ENCODE measurements at regions of chr17 and their contacts with region 1.

Region 1: DNA sequence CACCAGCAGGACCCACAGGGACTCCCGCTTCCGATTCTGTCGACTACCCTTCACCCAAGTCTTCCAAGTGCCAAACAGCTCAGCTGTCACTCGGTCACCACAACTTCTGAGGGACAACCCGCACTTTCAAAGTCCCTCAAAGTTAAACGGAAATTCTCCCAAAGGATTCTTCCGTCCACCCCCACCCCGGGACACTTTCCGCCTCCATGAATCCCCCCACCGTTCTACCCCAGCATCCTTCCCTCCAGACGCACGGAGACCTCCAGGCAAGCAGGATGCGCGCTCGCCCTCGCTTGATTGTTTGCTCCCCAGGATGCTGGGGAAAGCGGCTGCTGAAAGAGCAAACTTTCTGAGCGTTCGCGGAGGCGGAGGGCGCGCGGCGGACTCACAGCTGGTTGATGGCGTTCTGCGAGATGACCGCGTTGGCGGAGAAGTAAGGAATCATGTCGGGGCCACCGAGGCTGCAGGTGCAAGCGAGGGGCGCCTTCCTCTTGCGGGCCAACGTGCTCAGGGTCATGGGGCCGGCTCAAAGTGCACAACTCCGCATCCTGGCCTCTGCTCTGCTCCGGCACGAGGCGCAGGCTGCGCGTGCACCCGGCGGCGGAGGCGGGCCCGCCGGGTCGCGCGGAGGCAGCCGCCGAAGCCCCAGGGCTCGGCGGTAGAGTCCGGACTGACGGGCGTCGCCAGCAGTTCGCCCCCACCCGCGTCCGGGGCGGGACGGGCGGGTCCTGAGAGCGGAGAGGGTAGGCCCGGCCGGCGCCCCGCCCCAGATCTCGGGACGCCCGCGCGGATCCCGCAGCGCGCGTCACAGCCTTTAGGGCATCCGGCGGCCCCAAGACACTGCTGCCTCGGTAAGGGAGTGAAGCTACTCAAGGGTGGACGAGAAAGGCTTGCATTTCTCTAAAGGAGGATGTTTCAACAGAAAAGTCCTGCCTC is 138.3 kb upstream of the CORO6 start:
- DNase-seq: peak; percentile 92 to 97 (median 94)
- ATAC-seq: peak; percentile 95 to 99 (median 98)
- H3K4me3 ChIP-seq: peak overlapping the region; percentile 62 to 95 (median 89)
- H3K27ac ChIP-seq: peak overlapping the region; percentile 48 to 97 (median 90)
- H3K4me1 ChIP-seq: peaks cover 0 to 42% (median 22%) of the 10 kb centered on the region in 12 donors
- H3K27me3 ChIP-seq: no peaks in the 10 kb centered on the region
- CTCF ChIP-seq: peak in 2 of 12 donors; percentile 6 to 26
- POLR2A ChIP-seq: peak; percentile 33 to 89

Region 2: DNA sequence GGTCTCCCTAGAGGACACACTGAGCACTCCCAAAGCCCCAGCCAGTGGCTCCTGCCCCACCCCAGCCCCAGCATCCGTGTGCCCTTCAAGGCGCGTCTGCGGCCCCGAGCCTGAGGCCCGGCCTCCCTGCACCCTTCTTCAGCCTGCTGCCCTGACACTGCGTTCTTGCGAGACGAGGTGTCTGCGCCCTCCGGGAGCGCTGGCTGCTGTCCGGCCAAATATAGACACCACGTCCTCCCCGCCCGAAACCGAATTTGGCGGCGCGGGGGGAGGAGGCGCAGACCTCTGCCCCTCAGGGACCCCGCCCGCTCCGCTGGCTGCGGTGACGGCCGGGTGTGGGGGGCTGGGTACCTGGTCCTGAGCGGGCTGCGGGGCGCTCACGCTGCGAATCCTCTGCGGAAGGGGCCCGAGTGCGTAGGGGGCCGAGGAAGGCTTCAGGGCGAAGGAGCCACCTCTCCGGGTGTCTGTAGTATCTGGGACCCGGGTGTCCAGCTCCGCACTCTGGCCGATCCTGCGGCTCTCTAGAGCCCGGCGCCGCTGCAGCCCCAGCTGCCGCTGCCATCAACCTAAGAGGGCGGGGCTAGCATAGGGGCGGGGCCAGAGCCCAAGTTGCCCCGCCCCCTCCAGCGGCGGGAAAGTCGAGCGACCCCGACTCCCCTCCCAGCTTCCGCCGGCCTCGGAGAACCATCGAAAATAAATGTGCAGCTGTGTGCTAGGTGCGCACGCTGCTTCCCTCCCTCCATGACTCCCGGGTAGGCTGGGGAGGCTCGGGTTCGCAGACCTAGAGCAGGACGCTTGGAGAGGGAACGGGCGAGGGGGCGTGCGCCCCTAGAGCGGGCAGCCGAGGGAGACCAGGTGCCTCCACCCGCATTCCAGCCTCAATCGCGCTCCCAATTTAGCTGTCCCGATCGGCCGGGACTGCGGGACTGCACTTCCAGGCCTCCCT is 138.4 kb before region 1 on chr17 and contains the start of gene CORO6:
- intact Hi-C with region 1: no loop called
- DNase-seq: peak; percentile 64 to 85 (median 81)
- ATAC-seq: peak; percentile 53 to 71 (median 70)
- H3K4me3 ChIP-seq: peak within 1 kb of the TSS; percentile 51 to 83 (median 72)
- H3K27ac ChIP-seq: peak within 1 kb of the TSS; percentile 28 to 98 (median 88)
- H3K4me1 ChIP-seq: peaks cover 3 to 70% (median 40%) of the 10 kb centered on the region in 12 donors
- H3K27me3 ChIP-seq: no peaks in the 10 kb centered on the region
- CTCF ChIP-seq: no peak
- POLR2A ChIP-seq: peak; percentile 41 to 83
- total RNA-seq, gene CORO6: 72.1 to 115 (median 95.5) TPM

Region 3: DNA sequence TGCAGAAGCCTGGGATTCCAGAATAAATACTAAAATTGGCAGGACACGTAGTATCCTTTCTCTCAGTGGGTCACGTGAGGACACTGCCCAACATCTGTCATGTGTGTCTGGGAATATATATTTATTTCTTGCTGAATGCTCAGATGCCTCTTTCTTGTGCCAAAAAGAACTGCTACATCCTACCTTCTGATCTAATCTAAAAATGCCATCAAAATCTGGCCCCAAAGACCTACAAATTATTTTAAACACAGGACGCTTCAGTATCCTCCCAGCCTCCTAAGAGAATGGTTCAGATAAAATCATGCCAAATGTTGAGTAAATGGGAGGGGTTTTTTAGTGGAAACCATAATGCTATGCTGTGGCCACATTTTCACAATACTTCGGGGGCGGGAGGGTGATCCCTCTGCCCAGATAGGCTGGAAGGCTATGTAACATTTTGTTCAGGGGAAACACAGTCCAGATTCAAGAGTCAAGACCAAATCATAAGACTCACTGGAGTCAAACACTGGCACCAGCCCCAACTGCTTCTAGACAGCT is 115.4 kb before region 1 on chr17:
- intact Hi-C with region 1: loop called in 7 of 10 experiments (anchors 5 kb)
- DNase-seq: peak in 4 of 5 donors; percentile 63 to 85 (median 72)
- ATAC-seq: peak; percentile 71 to 91 (median 81)
- H3K4me3 ChIP-seq: no peak overlapping the region
- H3K27ac ChIP-seq: peak overlapping the region; percentile 57 to 83 (median 74)
- H3K4me1 ChIP-seq: peaks cover 11 to 69% (median 59%) of the 10 kb centered on the region in 12 donors
- H3K27me3 ChIP-seq: no peaks in the 10 kb centered on the region
- CTCF ChIP-seq: no peak
- POLR2A ChIP-seq: no peak

Region 4: GRCh38 chr17:29687596-29687995 is 73.4 kb before region 1 on chr17:
- intact Hi-C with region 1: loop called in 5 of 10 experiments (anchors 5 to 10 kb)
- DNase-seq: no peak
- ATAC-seq: peak; percentile 23 to 74 (median 66)
- H3K4me3 ChIP-seq: no peak overlapping the region
- H3K27ac ChIP-seq: peak overlapping the region; percentile 3 to 77 (median 50)
- H3K4me1 ChIP-seq: peaks cover 0 to 69% (median 31%) of the 10 kb centered on the region in 12 donors
- H3K27me3 ChIP-seq: no peaks in the 10 kb centered on the region
- CTCF ChIP-seq: no peak
- POLR2A ChIP-seq: no peak

Region 5: DNA sequence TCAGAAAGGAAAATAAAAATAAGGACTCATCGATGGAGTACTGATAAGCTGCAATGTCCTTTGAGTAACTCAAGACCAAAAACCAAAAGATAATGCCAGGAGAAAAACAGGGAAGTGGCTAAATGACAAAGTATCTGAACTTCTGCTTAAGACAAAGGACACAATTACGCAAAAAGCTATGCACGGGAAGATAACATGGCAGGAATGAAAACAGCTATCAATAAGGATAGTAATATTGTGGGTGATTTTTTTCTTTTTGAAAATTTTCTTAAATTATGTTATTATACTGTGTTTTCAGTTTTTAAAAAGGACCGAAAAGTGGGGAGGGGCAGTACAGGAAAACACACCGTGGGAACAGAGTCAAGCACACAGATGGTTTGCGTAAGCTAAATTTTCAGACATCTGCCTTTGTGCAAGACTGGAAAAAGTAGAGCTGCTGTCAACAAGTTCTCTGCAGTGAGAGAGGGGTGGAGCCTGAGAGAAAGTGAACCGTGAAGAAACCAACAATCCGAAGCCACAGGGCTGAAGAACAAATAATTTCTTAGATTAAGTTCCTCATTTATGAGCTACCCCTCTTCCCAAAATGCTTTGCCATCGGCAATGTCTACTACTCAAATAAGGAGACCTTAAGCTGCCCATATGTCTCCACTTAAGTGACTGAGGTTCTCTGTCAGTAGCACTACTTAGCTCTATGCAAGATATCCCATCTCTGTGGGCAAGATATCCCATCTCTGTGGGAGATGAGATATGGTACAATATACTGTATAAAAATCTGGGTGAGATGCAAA is 38.4 kb before region 1 on chr17:
- intact Hi-C with region 1: loop called in 1 of 10 experiments (anchors 5 kb)
- DNase-seq: peak in 4 of 5 donors; percentile 62 to 72 (median 67)
- ATAC-seq: peak; percentile 79 to 94 (median 90)
- H3K4me3 ChIP-seq: peak overlapping the region in 9 of 12 donors; percentile 7 to 51 (median 25)
- H3K27ac ChIP-seq: peak overlapping the region; percentile 75 to 89 (median 82)
- H3K4me1 ChIP-seq: peaks cover 2 to 94% (median 52%) of the 10 kb centered on the region in 12 donors
- H3K27me3 ChIP-seq: no peaks in the 10 kb centered on the region
- CTCF ChIP-seq: no peak
- POLR2A ChIP-seq: no peak